Ascending aorta (tissue), 2 donors: ENCODE measurements at regions of chr16 and their contacts with region 1.

Region 1: GRCh38 chr16:56608043-56608875 is at the start of gene MT2A:
- DNase-seq: peak; percentile 92 to 98
- H3K4me3 ChIP-seq: peak within 1 kb of the TSS; percentile 51 to 70
- H3K27ac ChIP-seq: peak within 1 kb of the TSS; percentile 87 to 92
- H3K4me1 ChIP-seq: peaks cover 11 to 35% of the 10 kb centered on the region in 2 donors
- H3K27me3 ChIP-seq: no peaks in the 10 kb centered on the region
- CTCF ChIP-seq: no peak
- total RNA-seq, gene MT2A: 602 TPM

Region 2: DNA sequence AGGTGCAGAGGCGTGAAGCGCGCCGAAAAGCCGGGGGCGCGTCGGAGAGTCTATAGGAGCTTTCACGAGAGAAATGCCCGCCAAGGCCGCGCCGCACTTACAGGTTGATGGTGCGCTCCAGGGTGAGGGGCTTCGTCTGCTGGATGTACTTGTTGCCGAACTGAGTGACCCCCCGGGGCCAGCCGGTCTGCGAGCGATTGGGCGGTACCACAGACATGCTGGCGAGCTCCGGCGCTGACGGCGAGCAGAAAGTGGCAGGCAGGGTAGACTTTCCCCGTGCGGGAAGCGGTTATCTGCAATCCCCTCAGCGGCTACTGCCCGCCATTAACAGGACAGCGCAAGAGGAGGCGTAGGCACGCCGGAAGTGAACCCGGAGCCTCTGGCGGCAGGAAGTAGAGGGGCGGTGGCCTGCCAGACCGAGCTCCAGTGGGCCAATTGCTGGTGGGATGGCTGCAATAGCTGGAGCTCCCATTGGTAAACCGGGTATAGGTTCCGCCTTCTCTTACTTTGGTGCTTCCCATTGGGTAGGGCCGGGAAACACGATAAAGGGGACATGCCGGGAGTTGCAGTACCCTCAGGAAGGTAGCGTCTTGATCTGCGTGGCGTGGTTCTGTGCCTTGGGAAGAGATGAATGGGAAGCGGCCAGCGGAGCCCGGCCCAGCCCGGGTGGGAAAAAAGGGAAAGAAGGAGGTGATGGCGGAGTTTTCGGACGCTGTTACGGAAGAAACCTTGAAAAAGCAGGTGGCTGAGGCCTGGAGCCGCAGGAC is 157.1 kb before region 1 on chr16 and contains the starts of genes NUDT21 and OGFOD1:
- intact Hi-C with region 1: loop called (anchors 5 kb)
- DNase-seq: peak; percentile 88 to 97
- H3K4me3 ChIP-seq: peak within 1 kb of the TSS; percentile 86 to 90
- H3K27ac ChIP-seq: peak within 1 kb of the TSS; percentile 84 to 92
- H3K4me1 ChIP-seq: peaks cover 23 to 26% of the 10 kb centered on the region in 2 donors
- H3K27me3 ChIP-seq: no peaks in the 10 kb centered on the region
- CTCF ChIP-seq: no peak
- total RNA-seq, gene NUDT21: 5.3 TPM
- total RNA-seq, gene OGFOD1: 21.9 TPM

Region 3: GRCh38 chr16:56576585-56577293 is 31.5 kb before region 1 on chr16:
- intact Hi-C with region 1: no loop called
- DNase-seq: peak in 1 of 2 donors; percentile 82
- H3K4me3 ChIP-seq: no peak overlapping the region
- H3K27ac ChIP-seq: no peak overlapping the region
- H3K4me1 ChIP-seq: no peaks in the 10 kb centered on the region
- H3K27me3 ChIP-seq: no peaks in the 10 kb centered on the region
- CTCF ChIP-seq: peak; percentile 45 to 71 (median 67)

Region 4: DNA sequence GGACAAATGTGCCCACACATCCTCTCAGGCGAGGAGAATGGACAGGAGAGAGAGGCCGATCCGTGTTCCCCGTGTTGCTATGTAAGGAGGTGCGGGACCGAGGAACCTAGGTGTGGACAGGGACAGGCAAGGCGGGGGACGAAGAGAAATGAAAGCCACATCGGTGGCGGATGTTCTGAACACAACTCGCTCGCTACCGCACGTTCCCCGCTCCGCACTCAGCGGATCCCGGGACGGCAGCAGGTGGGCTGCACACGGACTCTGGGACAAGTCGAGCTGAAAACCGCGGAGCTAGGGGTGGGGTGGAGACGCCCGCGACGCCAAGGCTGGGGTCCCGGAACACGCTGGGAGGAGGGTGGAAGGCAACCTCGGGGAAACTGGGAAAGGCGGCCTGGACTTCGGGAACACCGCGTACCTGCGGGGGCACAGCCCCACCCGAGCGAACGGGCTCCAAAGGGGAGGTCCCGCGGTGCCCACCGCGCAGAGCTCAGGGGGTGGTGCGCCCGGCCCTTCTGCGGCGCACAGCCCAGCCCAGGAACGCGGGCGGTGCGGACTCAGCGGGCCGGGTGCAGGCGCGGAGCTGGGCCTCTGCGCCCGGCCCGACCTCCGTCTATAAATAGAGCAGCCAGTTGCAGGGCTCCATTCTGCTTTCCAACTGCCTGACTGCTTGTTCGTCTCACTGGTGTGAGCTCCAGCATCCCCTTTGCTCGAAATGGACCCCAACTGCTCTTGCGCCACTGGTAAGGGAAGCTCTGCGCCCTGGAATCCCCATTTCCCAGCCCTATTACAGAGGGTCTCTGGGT is 17.1 kb after region 1 on chr16 and contains the start of gene MT1E:
- intact Hi-C with region 1: loop called (anchors 1 kb)
- DNase-seq: peak in 1 of 2 donors; percentile 93
- H3K4me3 ChIP-seq: peak within 1 kb of the TSS; percentile 71 to 82
- H3K27ac ChIP-seq: peak within 1 kb of the TSS; percentile 96
- H3K4me1 ChIP-seq: peaks cover 3 to 4% of the 10 kb centered on the region in 2 donors
- H3K27me3 ChIP-seq: no peaks in the 10 kb centered on the region
- CTCF ChIP-seq: no peak
- total RNA-seq, gene MT1E: 456 TPM

Region 5: DNA sequence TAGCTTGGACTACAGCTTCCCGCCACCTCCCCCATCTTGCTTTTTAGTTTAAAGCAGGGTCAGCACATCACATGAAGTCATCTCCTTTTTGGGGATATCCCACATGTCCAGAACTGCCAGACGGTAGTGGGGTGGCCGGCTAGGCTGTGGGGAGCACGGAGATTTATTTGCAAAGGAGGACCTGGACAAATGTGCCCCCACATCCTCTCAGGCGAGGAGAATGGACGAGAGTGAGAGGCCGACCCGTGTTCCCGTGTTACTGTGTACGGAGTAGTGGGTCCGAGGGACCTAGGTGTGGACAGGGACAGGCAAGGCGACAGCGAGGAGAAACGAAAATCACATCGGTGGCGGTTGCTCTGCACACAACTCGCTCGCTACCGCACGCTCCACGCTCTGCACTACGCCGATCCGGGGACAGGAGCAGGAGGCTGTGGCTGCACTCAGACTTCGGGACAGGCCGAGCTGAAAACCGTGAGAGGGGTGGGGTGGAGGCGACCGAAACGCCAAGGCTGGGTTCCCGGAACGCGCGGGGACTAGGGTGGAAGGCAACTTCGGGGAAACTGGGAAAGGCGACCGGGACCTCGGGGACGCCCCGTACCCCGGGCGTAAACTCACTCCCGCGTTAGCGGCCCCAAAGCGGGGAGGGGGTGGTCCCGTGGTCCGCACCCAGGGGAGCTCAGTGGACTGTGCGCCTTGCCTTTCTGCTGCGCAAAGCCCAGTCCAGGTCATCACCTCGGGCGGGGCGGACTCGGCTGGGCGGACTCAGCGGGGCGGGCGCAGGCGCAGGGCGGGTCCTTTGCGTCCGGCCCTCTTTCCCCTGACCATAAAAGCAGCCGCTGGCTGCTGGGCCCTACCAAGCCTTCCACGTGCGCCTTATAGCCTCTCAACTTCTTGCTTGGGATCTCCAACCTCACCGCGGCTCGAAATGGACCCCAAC is 29.8 kb after region 1 on chr16 and contains the start of gene MT1A:
- intact Hi-C with region 1: loop called (anchors 1 kb)
- DNase-seq: peak; percentile 50 to 91
- H3K4me3 ChIP-seq: peak within 1 kb of the TSS; percentile 60 to 64
- H3K27ac ChIP-seq: peak within 1 kb of the TSS; percentile 72 to 82
- H3K4me1 ChIP-seq: peaks cover 5 to 16% of the 10 kb centered on the region in 2 donors
- H3K27me3 ChIP-seq: no peaks in the 10 kb centered on the region
- CTCF ChIP-seq: no peak
- total RNA-seq, gene MT1A: 183 TPM

Region 6: DNA sequence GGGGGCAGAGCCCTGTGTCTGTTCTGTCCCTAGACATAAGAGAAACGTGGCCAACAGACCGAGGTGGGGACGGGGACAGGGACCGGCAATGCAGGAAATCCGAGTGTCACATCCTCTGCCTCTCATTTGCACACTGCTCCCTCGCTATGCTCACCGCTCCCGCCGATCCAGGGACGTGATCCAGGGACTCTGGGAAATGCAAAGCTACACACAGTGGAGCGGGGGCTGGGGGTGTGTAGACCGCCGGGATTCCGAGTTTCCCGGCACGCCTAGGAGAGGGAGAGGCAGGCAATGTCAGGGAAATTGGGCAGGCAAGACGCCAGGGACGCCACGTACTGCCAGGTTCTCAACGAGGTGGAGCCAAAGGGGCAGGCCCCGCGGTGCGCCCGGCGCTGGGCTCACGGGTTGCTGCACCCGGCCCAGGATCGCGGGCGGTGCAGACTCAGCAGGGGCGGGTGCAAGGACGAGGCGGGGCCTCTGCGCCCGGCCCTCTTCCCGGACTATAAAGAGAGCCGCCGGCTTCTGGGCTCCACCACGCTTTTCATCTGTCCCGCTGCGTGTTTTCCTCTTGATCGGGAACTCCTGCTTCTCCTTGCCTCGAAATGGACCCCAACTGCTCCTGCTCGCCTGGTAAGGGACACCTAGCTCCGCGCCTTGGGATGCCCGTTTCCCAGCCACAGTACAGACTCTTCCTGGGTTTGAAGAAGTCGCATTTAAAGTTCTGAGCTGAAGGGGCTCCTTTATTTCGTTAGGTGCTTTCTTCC is 73.9 kb after region 1 on chr16 and contains the start of gene MT1X:
- intact Hi-C with region 1: loop called (anchors 2 kb)
- DNase-seq: peak; percentile 81 to 97
- H3K4me3 ChIP-seq: peak within 1 kb of the TSS; percentile 71 to 85
- H3K27ac ChIP-seq: peak within 1 kb of the TSS; percentile 83 to 88
- H3K4me1 ChIP-seq: peaks cover 0 to 26% of the 10 kb centered on the region in 2 donors
- H3K27me3 ChIP-seq: no peaks in the 10 kb centered on the region
- CTCF ChIP-seq: no peak
- total RNA-seq, gene MT1X: 2,291 TPM